Activated CD4-positive, alpha-beta memory T cell treated with anti-CD3 and anti-CD28 coated beads for 36 hours (primary cell): ENCODE measurements at regions of chr1 and their contacts with region 1.

Region 1: GRCh38 chr1:147670317-147671041 is at the start of gene ACP6:
- DNase-seq: peak; percentile 94
- H3K4me3 Mint-ChIP-seq: peak within 1 kb of the TSS; percentile 89
- H3K27ac Mint-ChIP-seq: peak within 1 kb of the TSS; percentile 84
- H3K4me1 Mint-ChIP-seq: peaks cover 18% of the 10 kb centered on the region
- H3K27me3 Mint-ChIP-seq: peaks cover 2% of the 10 kb centered on the region
- total RNA-seq, gene ACP6: 11.6 to 12.5 TPM

Region 2: DNA sequence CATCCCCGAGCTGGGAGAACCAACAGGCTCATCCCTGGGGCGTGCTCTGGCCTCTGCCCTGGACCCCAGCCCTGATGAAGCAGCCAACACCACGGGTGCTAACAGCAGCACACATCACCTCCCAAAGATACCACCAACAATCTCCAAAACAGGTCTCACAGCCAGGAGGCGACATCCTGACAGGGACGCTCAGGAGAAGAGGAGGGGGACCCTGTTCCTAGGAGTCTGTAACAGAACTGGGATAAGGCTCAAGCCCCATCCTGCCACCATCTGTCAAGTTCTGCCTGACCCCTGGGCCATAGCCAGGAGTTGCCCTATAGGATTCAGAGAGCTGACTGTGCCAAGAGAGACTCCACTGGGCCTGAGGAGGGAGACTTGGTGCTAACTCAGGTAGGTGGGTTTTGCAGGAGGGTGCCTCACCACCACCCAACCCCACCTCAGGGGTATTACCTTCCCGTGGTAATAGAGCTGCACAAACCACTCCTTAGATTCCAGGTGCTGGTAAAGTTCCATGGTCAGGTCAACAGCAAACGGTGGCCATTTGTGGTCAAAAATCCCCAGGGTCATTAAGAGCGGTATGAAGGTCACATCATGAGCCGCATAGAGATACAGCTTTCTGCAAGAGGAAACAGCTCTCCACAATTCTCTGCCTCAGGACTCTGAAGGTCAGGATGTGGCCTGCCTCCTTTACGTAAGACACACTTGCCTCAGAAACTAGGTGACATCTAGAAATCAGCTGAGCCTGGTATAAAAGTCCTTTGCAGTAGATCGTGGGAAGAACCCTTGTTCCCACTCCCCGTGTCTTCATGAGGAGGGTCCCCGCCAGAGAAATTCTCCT is 22.5 kb before region 1 on chr1:
- CTCF ChIA-PET with region 1: interaction called, 3 read pairs
- POLR2A ChIA-PET with region 1: interaction called, 3 read pairs
- intact Hi-C with region 1: loop called (anchors 2 kb)
- DNase-seq: peak; percentile 58
- H3K4me3 Mint-ChIP-seq: peak overlapping the region; percentile 20
- H3K27ac Mint-ChIP-seq: peak overlapping the region; percentile 56
- H3K4me1 Mint-ChIP-seq: peaks cover 50% of the 10 kb centered on the region
- H3K27me3 Mint-ChIP-seq: no peaks in the 10 kb centered on the region

Region 3: DNA sequence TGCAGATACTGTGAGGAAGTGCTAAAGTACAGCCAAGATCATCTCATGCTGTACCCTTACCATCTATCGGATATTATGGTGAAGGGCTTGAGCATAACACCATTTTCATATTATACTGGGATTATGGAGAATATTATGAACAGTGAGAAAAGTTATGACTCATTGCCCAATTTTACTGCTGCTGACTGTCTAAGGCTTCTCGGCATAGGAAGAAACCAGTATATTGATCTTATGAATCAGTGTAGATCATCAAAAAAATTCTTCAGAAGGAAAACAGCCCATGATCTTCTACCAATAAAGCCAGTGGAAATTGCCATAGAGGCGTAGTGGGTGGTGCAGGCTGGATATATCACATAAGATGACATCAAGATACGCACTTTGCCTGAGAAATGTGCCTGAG is 764.9 kb after region 1 on chr1:
- CTCF ChIA-PET with region 1: no interaction called
- POLR2A ChIA-PET with region 1: no interaction called
- intact Hi-C with region 1: no loop called
- DNase-seq: no peak
- H3K4me3 Mint-ChIP-seq: no peak overlapping the region
- H3K27ac Mint-ChIP-seq: peak overlapping the region; percentile 67
- H3K4me1 Mint-ChIP-seq: peaks cover 62% of the 10 kb centered on the region
- H3K27me3 Mint-ChIP-seq: no peaks in the 10 kb centered on the region